Common myeloid progenitor, CD34-positive (primary cell): ENCODE measurements at regions of chr15 and their contacts with region 1.

Region 1: DNA sequence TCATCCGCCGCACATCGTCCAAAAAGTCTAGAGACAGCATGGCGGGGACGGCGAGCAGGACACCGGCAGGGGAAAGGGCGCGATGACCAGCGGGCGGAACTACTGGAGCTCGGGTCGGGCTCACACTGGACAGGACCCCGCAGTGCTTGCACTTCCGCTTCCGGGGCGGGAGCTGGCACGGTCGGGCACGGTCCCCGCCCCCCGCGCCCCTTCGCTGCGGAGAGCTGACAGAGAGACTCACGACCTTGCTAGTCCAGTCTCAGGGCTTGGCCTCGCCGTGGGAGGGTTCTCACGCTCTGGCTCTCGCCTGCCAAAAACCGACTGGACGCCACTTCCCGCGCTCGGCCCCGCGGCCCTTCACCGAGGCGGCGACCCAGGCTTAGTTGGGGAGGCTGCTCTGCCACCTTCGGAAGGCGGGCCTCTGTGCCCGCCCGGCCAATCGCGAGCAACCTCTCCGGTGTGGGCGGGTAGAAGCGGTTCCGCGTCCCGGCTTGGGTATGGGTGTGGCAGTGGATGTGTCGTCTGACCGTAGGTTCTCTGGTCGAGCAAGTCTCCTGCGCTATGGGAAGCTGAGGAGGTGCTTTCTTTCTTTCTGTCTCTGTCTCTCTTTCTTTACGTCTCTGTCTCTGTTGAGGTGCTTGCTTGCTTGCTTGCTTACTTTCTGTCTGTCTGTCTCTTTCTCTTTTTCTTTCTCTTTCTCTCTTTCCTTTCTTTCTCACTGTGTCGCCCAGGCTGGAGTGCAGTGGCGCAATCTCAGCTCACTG is at the start of gene SEC11A:
- DNase-seq: peak; percentile 91 to 93 (median 91)
- H3K4me3 ChIP-seq: peak within 1 kb of the TSS; percentile 94 to 100 (median 99)
- H3K27ac ChIP-seq: peak within 1 kb of the TSS; percentile 42 to 84
- H3K4me1 ChIP-seq: peaks cover 7 to 30% (median 21%) of the 10 kb centered on the region in 4 experiments
- H3K27me3 ChIP-seq: no peaks in the 10 kb centered on the region

Region 2: GRCh38 chr15:84697236-84697990 is 18.8 kb before region 1 on chr15:
- CTCF ChIA-PET with region 1: no interaction called
- POLR2A ChIA-PET with region 1: no interaction called
- DNase-seq: no peak
- H3K4me3 ChIP-seq: no peak overlapping the region
- H3K27ac ChIP-seq: no peak overlapping the region
- H3K4me1 ChIP-seq: peaks cover 0 to 10% (median 3%) of the 10 kb centered on the region in 4 experiments
- H3K27me3 ChIP-seq: no peaks in the 10 kb centered on the region

Region 3: GRCh38 chr15:84748274-84749110 is 32.3 kb after region 1 on chr15 and contains the start of gene ZNF592:
- CTCF ChIA-PET with region 1: interaction called, 6 read pairs
- POLR2A ChIA-PET with region 1: interaction called, 14 read pairs
- DNase-seq: peak; percentile 75 to 91 (median 87)
- H3K4me3 ChIP-seq: peak within 1 kb of the TSS; percentile 59 to 95 (median 87)
- H3K27ac ChIP-seq: peak within 1 kb of the TSS; percentile 77 to 93
- H3K4me1 ChIP-seq: peaks cover 20 to 48% (median 34%) of the 10 kb centered on the region in 4 experiments
- H3K27me3 ChIP-seq: no peaks in the 10 kb centered on the region